Esophagus muscularis mucosa (tissue), 4 donors: ENCODE measurements at regions of chr18 and their contacts with region 1.

Region 1: DNA sequence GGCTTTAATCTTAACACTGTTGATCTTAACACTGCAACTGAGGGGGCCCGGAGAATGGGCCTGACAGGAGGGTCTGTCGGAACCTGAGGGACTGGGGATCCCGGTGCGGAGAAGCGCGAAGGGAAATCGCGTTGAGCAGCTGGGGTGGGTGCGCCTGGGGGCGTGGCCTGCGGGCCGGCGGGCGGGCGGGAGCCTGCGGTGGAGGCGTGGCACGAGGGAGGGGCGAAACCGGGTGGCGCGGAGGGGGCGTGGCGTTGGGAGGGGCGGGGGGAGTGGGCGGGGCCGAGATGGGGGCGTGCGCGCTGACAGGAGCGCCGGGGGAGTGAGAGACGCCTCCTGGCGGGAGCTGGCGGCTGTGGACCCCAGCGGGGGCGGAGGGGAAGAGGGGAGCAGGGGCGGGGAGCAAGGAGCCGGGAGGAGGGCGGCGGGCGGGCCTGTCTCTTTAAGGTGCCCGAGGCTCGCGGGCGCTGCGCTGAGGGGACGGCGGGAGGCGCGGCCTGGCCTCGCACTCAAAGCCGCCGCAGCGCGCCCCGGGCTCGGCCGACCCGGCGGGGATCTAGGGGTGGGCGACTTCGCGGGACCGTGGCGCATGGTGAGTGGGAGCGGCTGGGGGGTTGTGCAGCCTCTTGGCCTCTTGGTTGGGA is at the start of gene TWSG1:
- DNase-seq: peak; percentile 98
- H3K4me3 ChIP-seq: peak within 1 kb of the TSS; percentile 87 to 95 (median 91)
- H3K27ac ChIP-seq: peak within 1 kb of the TSS; percentile 92 to 97 (median 96)
- H3K4me1 ChIP-seq: peaks cover 5 to 36% (median 33%) of the 10 kb centered on the region in 4 donors
- H3K27me3 ChIP-seq: no peaks in the 10 kb centered on the region
- CTCF ChIP-seq: peak in 2 of 3 experiments; percentile 39 to 60
- EP300 ChIP-seq: no peak
- POLR2A ChIP-seq: peak; percentile 49
- total RNA-seq, gene TWSG1: 88.1 to 131 (median 101) TPM

Region 2: GRCh38 chr18:9079818-9080528 is 254.5 kb before region 1 on chr18:
- intact Hi-C with region 1: loop called (anchors 10 kb)
- DNase-seq: no peak
- H3K4me3 ChIP-seq: no peak overlapping the region
- H3K27ac ChIP-seq: peak overlapping the region in 3 of 4 donors; percentile 13 to 31 (median 23)
- H3K4me1 ChIP-seq: peaks cover 0 to 7% (median 3%) of the 10 kb centered on the region in 4 donors
- H3K27me3 ChIP-seq: no peaks in the 10 kb centered on the region
- CTCF ChIP-seq: no peak
- EP300 ChIP-seq: no peak
- POLR2A ChIP-seq: no peak

Region 3: GRCh38 chr18:9474983-9475642 is 140.7 kb after region 1 on chr18 and contains the start of gene RALBP1:
- intact Hi-C with region 1: loop called (anchors 5 kb)
- DNase-seq: peak; percentile 99
- H3K4me3 ChIP-seq: peak within 1 kb of the TSS; percentile 82 to 94 (median 88)
- H3K27ac ChIP-seq: peak within 1 kb of the TSS; percentile 87 to 96 (median 92)
- H3K4me1 ChIP-seq: peaks cover 19 to 28% (median 20%) of the 10 kb centered on the region in 4 donors
- H3K27me3 ChIP-seq: no peaks in the 10 kb centered on the region
- CTCF ChIP-seq: peak in 2 of 3 experiments; percentile 39 to 51
- EP300 ChIP-seq: no peak
- POLR2A ChIP-seq: peak; percentile 53
- total RNA-seq, gene RALBP1: 103 to 164 (median 115) TPM